GM12878 (cell line): ENCODE measurements at regions of chr5 and their contacts with region 1.

Region 1: DNA sequence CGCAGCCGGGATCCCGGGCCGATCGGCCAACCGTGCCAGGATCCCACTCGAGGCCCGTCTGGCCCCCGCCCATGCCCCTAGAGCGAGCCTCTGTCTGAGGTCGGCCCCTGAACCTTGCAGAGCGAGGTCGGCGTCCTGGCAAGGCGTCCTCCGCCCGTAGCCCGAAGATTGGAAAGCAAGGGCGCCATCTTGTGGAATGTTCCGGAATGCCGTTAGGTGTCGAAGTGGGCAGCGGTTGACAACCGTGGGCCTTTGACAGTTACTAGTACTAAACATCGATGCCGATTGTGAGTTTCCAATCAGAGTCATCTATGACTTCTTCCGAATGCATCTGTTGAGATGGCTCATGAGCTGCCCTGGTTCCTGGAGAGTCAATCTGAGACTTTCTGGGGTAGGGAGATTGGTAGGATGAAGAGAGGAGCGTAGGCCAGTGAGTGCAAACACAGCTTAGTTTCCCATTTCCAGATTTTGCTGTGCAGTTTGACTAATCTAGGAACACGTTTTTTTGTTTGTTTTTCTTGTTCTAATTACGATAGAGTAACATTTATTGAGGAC is 923 bp upstream of the PLK2 start:
- DNase-seq: peak; percentile 49
- ATAC-seq: peak; percentile 92
- H3K4me3 ChIP-seq: peak overlapping the region; percentile 54
- H3K27ac ChIP-seq: no peak overlapping the region
- H3K4me1 ChIP-seq: peaks cover 12% of the 10 kb centered on the region
- H3K27me3 ChIP-seq: peaks cover 2 to 8% of the 10 kb centered on the region in 2 experiments; a peak in 3 of 4 replicates
- CTCF ChIP-seq: peak; percentile 76 to 84 (median 84)
- EP300 ChIP-seq: no peak
- POLR2A ChIP-seq: no peak
- RAD21 ChIP-seq: peak; percentile 91

Region 2: DNA sequence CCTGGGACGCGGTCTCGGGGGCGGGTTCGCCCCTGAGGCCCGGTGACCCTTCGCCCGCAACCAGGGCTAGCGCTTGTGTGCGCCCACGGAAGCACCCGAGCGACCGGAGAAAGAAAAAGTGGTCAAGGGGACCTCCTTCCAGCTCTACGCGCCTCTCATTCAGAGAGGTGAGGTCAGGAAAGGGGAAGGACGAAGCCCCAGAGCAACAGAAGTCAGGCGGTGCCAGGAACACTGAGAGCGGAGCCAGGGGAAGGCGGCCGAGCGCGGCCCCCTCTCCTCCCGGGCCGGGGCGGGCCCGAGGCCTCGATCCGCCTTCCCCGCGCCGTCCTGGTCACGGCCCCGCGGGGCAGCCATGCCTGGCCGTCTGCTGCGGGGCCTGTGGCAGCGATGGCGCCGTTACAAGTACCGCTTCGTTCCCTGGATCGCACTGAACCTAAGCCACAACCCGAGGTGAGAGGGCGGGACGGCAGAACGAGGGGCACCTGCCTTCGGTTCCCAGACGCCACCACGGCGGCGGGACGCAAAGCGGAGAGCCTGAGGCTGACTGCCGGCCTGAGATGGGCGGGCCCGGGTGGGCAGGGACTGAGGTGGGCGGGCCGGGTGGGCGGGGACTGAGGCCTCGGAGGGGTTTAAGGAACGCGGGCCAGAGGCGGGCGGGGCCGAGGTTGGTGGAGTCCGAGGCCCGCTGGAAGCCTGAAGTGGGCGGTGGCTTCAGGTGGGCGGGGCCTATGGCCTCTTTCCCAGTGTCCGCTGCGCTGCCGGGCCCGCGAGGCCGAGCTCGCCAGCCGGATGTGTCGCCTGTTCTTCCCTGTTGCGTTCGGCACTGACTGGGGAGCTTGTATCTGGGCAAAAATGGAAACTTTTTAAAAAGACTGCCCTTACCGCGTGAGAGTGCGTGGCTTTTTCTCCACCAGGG is 1551.3 kb before region 1 on chr5 and contains the start of gene SETD9:
- CTCF ChIA-PET with region 1: interaction called, 3 read pairs
- POLR2A ChIA-PET with region 1: no interaction called
- RAD21 ChIA-PET with region 1: interaction called, 3 read pairs
- SMC1A ChIA-PET with region 1: no interaction called
- in situ Hi-C with region 1: loop called (anchors 25 kb)
- intact Hi-C with region 1: loop called (anchors 10 kb)
- DNase-seq: peak; percentile 86
- ATAC-seq: peak; percentile 90
- H3K4me3 ChIP-seq: peak within 1 kb of the TSS; percentile 79
- H3K27ac ChIP-seq: peak within 1 kb of the TSS; percentile 91
- H3K4me1 ChIP-seq: peaks cover 7% of the 10 kb centered on the region
- H3K27me3 ChIP-seq: no peaks in the 10 kb centered on the region
- CTCF ChIP-seq: no peak
- EP300 ChIP-seq: no peak
- POLR2A ChIP-seq: peak; percentile 98
- RAD21 ChIP-seq: no peak
- polyA plus RNA-seq, gene SETD9: 12.9 to 17.1 TPM

Region 3: DNA sequence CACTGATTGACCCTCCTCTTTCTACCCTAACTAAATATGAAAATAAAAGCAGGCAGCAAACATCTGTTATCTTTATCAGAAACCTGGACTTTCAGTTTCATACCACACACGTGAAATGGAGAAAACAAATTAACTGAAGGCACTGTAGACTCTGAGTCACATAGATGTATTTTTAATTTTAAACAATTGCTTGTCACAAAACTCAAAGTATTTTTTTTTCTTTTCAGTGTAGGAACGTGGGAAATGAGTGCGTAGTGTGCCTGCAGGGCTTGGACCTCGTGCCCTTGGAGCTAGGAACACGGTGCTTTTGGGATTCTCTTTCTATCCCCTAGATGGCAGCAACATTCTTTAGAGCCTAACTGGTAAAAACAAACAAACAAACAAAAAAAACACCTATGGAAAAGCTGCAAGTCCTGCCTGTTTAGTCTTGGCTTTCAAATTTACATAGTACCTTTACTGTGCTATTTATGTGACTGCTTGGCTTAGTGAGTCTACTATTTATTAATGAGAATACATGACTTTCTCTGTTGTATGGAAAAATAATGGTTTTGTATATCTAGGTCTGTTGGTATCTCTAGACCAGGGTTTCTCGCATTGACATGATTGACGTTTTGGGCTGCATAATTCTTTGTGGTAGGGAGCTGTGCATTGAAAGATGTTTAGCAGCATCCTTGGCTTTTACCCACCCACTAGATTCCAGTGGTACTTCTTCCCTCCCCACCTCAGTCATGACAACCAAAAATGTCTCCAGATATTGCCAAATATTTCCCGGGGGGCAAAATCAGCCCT is 961.4 kb before region 1 on chr5:
- CTCF ChIA-PET with region 1: interaction called, 45 read pairs
- POLR2A ChIA-PET with region 1: interaction called, 3 read pairs
- RAD21 ChIA-PET with region 1: interaction called, 35 read pairs
- SMC1A ChIA-PET with region 1: interaction called, 21 read pairs
- in situ Hi-C with region 1: loop called (anchors 5 kb)
- intact Hi-C with region 1: loop called (anchors 1 kb)
- DNase-seq: peak; percentile 44
- ATAC-seq: peak; percentile 91
- H3K4me3 ChIP-seq: peak overlapping the region; percentile 42; the same call in 1 of the 2 replicates
- H3K27ac ChIP-seq: no peak overlapping the region
- H3K4me1 ChIP-seq: peaks cover 11% of the 10 kb centered on the region
- H3K27me3 ChIP-seq: no peaks in the 10 kb centered on the region; a peak in 1 of 4 replicates
- CTCF ChIP-seq: peak; percentile 64 to 78 (median 67)
- EP300 ChIP-seq: no peak
- POLR2A ChIP-seq: no peak
- RAD21 ChIP-seq: peak; percentile 79

Region 4: DNA sequence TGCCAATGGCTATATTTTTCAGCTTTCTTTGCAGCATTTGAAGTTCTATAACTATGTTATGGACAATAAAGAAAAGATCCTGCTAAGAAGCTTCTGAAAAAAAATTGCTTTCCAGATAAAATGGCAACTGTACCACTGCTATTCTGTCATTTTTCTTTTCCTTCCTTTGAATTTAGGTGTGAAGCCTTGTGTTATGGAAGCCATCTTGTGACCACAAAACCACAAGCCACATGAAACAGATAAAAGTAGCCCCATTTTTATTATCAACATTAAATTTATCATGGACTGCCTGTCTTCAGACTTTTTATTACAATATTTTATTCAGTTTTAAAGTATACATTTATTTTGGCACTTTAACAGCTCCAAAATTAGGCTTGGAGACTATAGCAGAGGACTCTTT is 688.3 kb before region 1 on chr5:
- CTCF ChIA-PET with region 1: interaction called, 80 read pairs
- POLR2A ChIA-PET with region 1: no interaction called
- RAD21 ChIA-PET with region 1: interaction called, 4 read pairs
- SMC1A ChIA-PET with region 1: interaction called, 3 read pairs
- in situ Hi-C with region 1: no loop called
- intact Hi-C with region 1: no loop called
- DNase-seq: no peak
- ATAC-seq: no peak
- H3K4me3 ChIP-seq: no peak overlapping the region
- H3K27ac ChIP-seq: no peak overlapping the region
- H3K4me1 ChIP-seq: no peaks in the 10 kb centered on the region
- H3K27me3 ChIP-seq: no peaks in the 10 kb centered on the region; a peak in 1 of 4 replicates
- CTCF ChIP-seq: no peak
- EP300 ChIP-seq: no peak
- POLR2A ChIP-seq: no peak
- RAD21 ChIP-seq: no peak

Region 5: GRCh38 chr5:57887851-57888621 is 572.8 kb before region 1 on chr5:
- CTCF ChIA-PET with region 1: interaction called, 11 read pairs
- POLR2A ChIA-PET with region 1: no interaction called
- RAD21 ChIA-PET with region 1: interaction called, 5 read pairs
- SMC1A ChIA-PET with region 1: interaction called, 4 read pairs
- in situ Hi-C with region 1: no loop called
- intact Hi-C with region 1: loop called (anchors 5 kb)
- DNase-seq: no peak
- ATAC-seq: peak; percentile 63
- H3K4me3 ChIP-seq: no peak overlapping the region
- H3K27ac ChIP-seq: no peak overlapping the region
- H3K4me1 ChIP-seq: no peaks in the 10 kb centered on the region
- H3K27me3 ChIP-seq: no peaks in the 10 kb centered on the region
- CTCF ChIP-seq: peak; percentile 12 to 31 (median 25); a peak in 2 of 6 replicates
- EP300 ChIP-seq: no peak
- POLR2A ChIP-seq: no peak
- RAD21 ChIP-seq: peak; percentile 49